Activated CD4-positive, alpha-beta memory T cell treated with anti-CD3 and anti-CD28 coated beads for 36 hours (primary cell): ENCODE measurements at regions of chr13 and their contacts with region 1.

Region 1: DNA sequence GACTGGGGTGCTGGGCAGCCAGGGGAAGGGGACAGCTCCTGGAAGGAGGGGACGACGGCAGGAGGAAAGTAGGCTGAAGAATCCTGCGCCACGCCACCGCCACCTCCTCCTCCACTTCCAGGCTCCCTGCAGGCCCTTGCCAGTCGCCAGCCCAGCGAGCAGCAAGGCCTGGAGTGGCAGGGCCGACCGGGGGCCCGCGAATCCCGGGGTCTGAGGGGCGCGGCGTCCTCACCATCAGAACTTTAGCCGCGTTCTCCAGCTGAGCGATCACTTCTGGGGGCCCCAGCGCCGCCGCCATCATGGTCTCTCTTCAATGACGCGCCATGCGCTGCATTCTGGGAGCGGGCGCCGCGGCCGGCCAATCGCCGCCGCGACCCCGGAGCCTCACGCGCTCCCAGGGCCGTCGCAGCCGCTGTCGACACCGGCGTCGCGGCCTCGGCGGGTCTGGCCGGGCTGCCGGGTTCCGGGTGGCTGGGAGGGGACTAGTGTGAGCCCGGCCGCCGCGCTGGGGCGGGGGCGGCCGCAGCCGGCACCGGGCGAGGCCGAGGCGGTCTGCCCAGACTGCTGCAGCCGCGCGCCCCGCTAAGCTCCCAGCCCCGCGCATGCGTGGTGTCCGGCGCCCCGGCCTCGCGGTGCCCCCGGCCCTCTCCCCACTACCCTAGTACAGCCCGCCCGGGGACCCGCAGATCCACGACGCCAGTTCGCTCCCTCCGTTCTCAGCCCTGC is at the start of gene XPO4:
- DNase-seq: peak; percentile 87
- H3K4me3 Mint-ChIP-seq: peak within 1 kb of the TSS; percentile 95
- H3K27ac Mint-ChIP-seq: peak within 1 kb of the TSS; percentile 87
- H3K4me1 Mint-ChIP-seq: peaks cover 33% of the 10 kb centered on the region
- H3K27me3 Mint-ChIP-seq: no peaks in the 10 kb centered on the region
- total RNA-seq, gene XPO4: 24.8 to 25.1 TPM

Region 2: GRCh38 chr13:20247403-20247802 is 655.2 kb before region 1 on chr13:
- CTCF ChIA-PET with region 1: no interaction called
- POLR2A ChIA-PET with region 1: no interaction called
- intact Hi-C with region 1: no loop called
- DNase-seq: no peak
- H3K4me3 Mint-ChIP-seq: no peak overlapping the region
- H3K27ac Mint-ChIP-seq: no peak overlapping the region
- H3K4me1 Mint-ChIP-seq: no peaks in the 10 kb centered on the region
- H3K27me3 Mint-ChIP-seq: no peaks in the 10 kb centered on the region

Region 3: GRCh38 chr13:20525690-20526544 is 376.7 kb before region 1 on chr13 and contains the start of gene CRYL1:
- CTCF ChIA-PET with region 1: no interaction called
- POLR2A ChIA-PET with region 1: no interaction called
- intact Hi-C with region 1: loop called (anchors 10 kb)
- DNase-seq: peak; percentile 77
- H3K4me3 Mint-ChIP-seq: peak within 1 kb of the TSS; percentile 84
- H3K27ac Mint-ChIP-seq: peak within 1 kb of the TSS; percentile 86
- H3K4me1 Mint-ChIP-seq: peaks cover 33% of the 10 kb centered on the region
- H3K27me3 Mint-ChIP-seq: peaks cover 5% of the 10 kb centered on the region
- total RNA-seq, gene CRYL1: 17.5 to 18.2 TPM

Region 4: GRCh38 chr13:20924758-20925394 is 22.3 kb after region 1 on chr13:
- CTCF ChIA-PET with region 1: interaction called, 10 read pairs
- POLR2A ChIA-PET with region 1: no interaction called
- intact Hi-C with region 1: no loop called
- DNase-seq: peak; percentile 77
- H3K4me3 Mint-ChIP-seq: no peak overlapping the region
- H3K27ac Mint-ChIP-seq: no peak overlapping the region
- H3K4me1 Mint-ChIP-seq: no peaks in the 10 kb centered on the region
- H3K27me3 Mint-ChIP-seq: no peaks in the 10 kb centered on the region

Region 5: GRCh38 chr13:20952838-20953237 is 50.2 kb after region 1 on chr13:
- CTCF ChIA-PET with region 1: no interaction called
- POLR2A ChIA-PET with region 1: no interaction called
- intact Hi-C with region 1: no loop called
- DNase-seq: no peak
- H3K4me3 Mint-ChIP-seq: no peak overlapping the region
- H3K27ac Mint-ChIP-seq: no peak overlapping the region
- H3K4me1 Mint-ChIP-seq: no peaks in the 10 kb centered on the region
- H3K27me3 Mint-ChIP-seq: peaks cover 26% of the 10 kb centered on the region

Region 6: DNA sequence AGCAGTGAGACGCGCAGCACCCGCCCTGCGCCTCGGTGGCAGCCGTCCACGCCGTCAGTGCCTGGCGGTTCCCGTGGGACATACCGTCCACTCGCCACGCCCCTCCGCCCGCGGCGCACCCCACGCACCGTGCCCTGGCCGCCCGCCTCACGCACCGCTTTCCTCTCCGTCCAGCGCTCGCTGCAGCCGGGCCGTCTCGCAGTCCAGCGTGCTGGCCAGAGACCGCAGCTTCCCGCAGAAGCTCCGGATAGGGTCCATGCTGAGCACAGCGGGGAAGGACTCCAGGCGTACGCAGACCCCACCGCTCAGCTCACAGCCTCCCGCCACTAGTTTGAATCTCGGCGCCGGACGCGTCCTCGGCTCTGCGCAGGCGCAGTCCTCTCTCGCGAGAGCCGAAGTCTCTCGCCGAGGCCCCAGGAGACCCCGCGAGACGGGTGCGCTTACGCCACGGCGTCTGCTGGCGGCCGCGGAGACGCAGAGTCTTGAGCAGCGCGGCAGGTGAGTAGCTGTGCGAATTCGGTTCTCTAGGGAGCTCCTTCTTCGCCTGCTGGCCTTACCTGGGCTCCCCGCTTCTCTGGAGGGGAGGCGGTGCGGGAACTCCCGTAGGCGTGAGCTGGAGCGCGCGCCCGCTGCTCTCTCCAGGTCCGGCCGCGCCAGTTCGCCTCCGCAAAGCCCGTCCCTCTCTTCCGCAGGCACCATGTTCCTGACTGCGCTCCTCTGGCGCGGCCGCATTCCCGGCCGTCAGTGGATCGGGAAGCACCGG is 273.8 kb after region 1 on chr13 and contains the starts of genes MRPL57 and SKA3:
- CTCF ChIA-PET with region 1: interaction called, 4 read pairs
- POLR2A ChIA-PET with region 1: interaction called, 10 read pairs
- intact Hi-C with region 1: loop called (anchors 2 kb)
- DNase-seq: peak; percentile 96
- H3K4me3 Mint-ChIP-seq: peak within 1 kb of the TSS; percentile 99
- H3K27ac Mint-ChIP-seq: peak within 1 kb of the TSS; percentile 96
- H3K4me1 Mint-ChIP-seq: peaks cover 18% of the 10 kb centered on the region
- H3K27me3 Mint-ChIP-seq: no peaks in the 10 kb centered on the region
- total RNA-seq, gene MRPL57: 20.8 to 23.1 TPM
- total RNA-seq, gene SKA3: 34.0 to 36.2 TPM